Naive thymus-derived CD4-positive, alpha-beta T cell (primary cell): ENCODE measurements at regions of chr9 and their contacts with region 1.

Region 1: GRCh38 chr9:129139993-129140396 is 28.8 kb downstream of the PTPA start:
- DNase-seq: peak; percentile 31 to 82 (median 66)
- ATAC-seq: peak; percentile 90
- H3K4me3 ChIP-seq: peak overlapping the region; percentile 64
- H3K4me3 Mint-ChIP-seq: peak overlapping the region; percentile 85 to 96 (median 90)
- H3K27ac ChIP-seq: peak overlapping the region; percentile 92
- H3K27ac Mint-ChIP-seq: peak overlapping the region; percentile 88 to 99 (median 94)
- H3K4me1 ChIP-seq: peaks cover 24 to 35% of the 10 kb centered on the region in 2 donors
- H3K4me1 Mint-ChIP-seq: peaks cover 11 to 45% (median 29%) of the 10 kb centered on the region in 7 donors
- H3K27me3 ChIP-seq: no peaks in the 10 kb centered on the region
- H3K27me3 Mint-ChIP-seq: no peaks in the 10 kb centered on the region

Region 2: DNA sequence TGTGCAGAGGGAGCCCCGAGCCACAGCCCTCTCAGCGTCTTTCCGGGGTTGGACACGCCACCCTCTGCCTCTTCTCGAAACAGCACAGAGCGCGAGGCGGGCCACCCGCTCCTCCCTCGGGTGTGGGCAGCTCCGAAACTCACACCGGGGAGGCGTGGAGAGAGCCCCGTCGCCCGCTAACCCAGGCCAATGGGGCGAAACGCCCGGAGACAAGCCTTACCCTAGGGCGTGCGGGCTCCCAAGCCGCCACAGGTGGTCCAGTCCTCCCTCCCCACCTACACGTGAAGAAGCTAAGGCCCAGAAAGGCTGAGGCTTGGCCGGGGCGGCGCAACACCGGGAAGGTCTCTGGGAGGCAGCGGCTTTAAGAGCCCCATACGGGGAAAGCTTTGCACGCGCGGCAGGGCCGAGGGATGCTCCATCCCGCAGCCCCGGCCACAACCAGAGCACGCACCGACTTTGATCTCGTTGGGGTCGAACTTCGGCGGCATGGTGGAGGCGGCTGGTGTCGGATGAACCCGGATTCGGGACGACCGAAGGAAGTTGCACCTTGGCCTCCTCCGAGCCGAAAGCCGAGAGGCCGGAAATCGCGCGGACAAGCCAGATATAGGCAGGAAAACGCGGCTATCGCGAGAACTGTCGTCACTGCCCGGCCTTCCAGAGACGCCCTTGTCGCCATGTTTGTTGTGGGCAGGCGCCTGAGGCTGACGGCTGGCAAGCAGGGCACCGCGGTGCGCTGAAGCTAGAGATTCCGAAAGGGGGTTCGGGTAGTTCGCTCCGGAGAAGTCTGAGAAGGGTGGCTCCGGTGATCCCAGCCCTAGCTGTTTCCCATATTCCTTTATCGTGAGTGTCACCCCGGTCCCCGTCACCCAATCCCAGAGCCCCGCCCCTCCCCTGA is 1688.9 kb before region 1 on chr9 and contains the starts of genes LRSAM1 and RPL12:
- CTCF ChIA-PET with region 1: no interaction called
- POLR2A ChIA-PET with region 1: no interaction called
- intact Hi-C with region 1: no loop called
- DNase-seq: peak; percentile 95 to 100 (median 98)
- ATAC-seq: peak; percentile 85
- H3K4me3 ChIP-seq: peak within 1 kb of the TSS; percentile 75
- H3K4me3 Mint-ChIP-seq: peak within 1 kb of the TSS; percentile 83 to 98 (median 94)
- H3K27ac ChIP-seq: peak within 1 kb of the TSS; percentile 86
- H3K27ac Mint-ChIP-seq: peak within 1 kb of the TSS; percentile 76 to 97 (median 94)
- H3K4me1 ChIP-seq: peaks cover 21 to 25% of the 10 kb centered on the region in 2 donors
- H3K4me1 Mint-ChIP-seq: peaks cover 21 to 45% (median 40%) of the 10 kb centered on the region in 7 donors
- H3K27me3 ChIP-seq: no peaks in the 10 kb centered on the region
- H3K27me3 Mint-ChIP-seq: no peaks in the 10 kb centered on the region
- total RNA-seq, gene LRSAM1: 15.1 to 23.3 (median 19.8) TPM
- total RNA-seq, gene RPL12: 1,005 to 1,932 (median 1,675) TPM

Region 3: DNA sequence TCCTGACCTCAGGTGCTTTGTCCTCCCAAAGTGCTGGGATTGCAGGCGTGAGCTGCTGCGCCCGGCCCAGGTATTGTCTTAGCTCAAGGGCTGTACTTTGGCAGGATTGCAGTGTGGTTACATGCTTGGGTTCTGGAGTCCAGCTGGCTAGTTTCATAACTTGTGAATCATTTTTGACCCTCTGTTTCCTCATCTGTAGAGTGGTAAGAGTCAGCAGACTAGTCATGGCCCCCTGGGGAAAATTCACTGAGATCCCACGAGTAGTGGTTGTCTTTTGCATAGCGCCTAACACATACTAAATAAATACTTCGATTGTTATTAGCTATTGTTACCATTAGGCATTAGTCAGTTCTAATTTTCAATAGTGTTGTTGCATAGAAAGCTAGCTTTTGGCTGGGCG is 14.5 kb before region 1 on chr9:
- CTCF ChIA-PET with region 1: interaction called, 80 read pairs
- POLR2A ChIA-PET with region 1: no interaction called
- intact Hi-C with region 1: no loop called
- DNase-seq: no peak
- ATAC-seq: no peak
- H3K4me3 ChIP-seq: no peak overlapping the region
- H3K4me3 Mint-ChIP-seq: no peak overlapping the region
- H3K27ac ChIP-seq: no peak overlapping the region
- H3K27ac Mint-ChIP-seq: no peak overlapping the region
- H3K4me1 ChIP-seq: no peaks in the 10 kb centered on the region
- H3K4me1 Mint-ChIP-seq: peaks cover 0 to 6% (median 4%) of the 10 kb centered on the region in 7 donors
- H3K27me3 ChIP-seq: no peaks in the 10 kb centered on the region
- H3K27me3 Mint-ChIP-seq: no peaks in the 10 kb centered on the region

Region 4: GRCh38 chr9:129202613-129203555 is 62.9 kb after region 1 on chr9:
- CTCF ChIA-PET with region 1: no interaction called
- POLR2A ChIA-PET with region 1: no interaction called
- intact Hi-C with region 1: loop called in 1 of 2 experiments (anchors 2 kb)
- DNase-seq: peak; percentile 84 to 96 (median 92)
- ATAC-seq: peak; percentile 99
- H3K4me3 ChIP-seq: peak overlapping the region; percentile 77
- H3K4me3 Mint-ChIP-seq: peak overlapping the region; percentile 64 to 82 (median 74)
- H3K27ac ChIP-seq: peak overlapping the region; percentile 83
- H3K27ac Mint-ChIP-seq: peak overlapping the region in 8 of 9 donors; percentile 64 to 91 (median 84)
- H3K4me1 ChIP-seq: peaks cover 21 to 23% of the 10 kb centered on the region in 2 donors
- H3K4me1 Mint-ChIP-seq: peaks cover 13 to 26% (median 20%) of the 10 kb centered on the region in 7 donors
- H3K27me3 ChIP-seq: no peaks in the 10 kb centered on the region
- H3K27me3 Mint-ChIP-seq: peaks cover 0 to 11% (median 0%) of the 10 kb centered on the region in 5 donors

Region 5: DNA sequence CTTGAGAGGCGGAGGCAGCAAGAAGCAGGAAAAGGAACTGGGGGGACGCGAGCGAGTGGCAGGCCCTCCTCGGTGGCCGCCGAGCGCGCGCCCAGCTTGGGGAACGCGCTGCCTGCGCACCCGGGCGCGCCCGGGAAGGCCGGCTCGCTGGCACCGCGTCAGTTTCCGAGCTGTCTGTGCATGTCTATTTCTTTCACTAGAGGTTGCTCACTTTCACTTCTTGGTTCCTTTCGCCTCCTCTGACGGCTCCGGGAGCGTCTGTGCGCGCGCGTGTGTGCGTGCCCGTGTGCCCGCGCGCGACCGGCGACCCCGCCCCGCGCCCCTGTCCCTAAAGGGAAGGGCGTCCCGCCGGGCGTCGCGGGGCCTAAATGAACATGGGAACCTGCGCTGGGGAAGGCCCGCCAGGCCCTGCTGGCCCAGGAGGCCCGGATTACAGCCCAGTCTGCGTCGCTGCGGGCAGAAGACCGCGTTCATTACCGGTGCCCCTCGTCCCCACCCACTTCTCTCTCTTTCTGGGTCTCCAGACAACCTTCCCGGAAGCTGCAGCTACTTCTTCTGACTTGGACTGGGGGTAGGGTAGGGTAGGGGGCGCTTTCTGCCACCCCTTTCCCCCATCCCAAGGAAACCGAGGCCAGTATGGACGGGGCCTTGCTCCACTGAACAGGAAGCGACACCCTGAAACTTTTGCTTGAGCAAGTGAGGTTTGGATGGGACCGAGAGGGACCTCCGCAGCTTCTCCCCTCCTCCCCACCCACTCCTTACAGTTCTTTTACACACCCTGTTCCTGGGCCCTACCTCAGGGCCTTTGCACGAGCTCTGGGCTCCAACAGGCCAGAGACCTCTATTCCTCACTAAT is 243.8 kb after region 1 on chr9:
- CTCF ChIA-PET with region 1: interaction called, 3 read pairs
- POLR2A ChIA-PET with region 1: interaction called, 5 read pairs
- intact Hi-C with region 1: loop called in 1 of 2 experiments (anchors 1 kb)
- DNase-seq: peak; percentile 60 to 87 (median 79)
- ATAC-seq: peak; percentile 96
- H3K4me3 ChIP-seq: peak overlapping the region; percentile 62
- H3K4me3 Mint-ChIP-seq: peak overlapping the region; percentile 70 to 86 (median 82)
- H3K27ac ChIP-seq: peak overlapping the region; percentile 82
- H3K27ac Mint-ChIP-seq: peak overlapping the region; percentile 72 to 96 (median 92)
- H3K4me1 ChIP-seq: peaks cover 0 to 12% of the 10 kb centered on the region in 2 donors
- H3K4me1 Mint-ChIP-seq: peaks cover 8 to 19% (median 10%) of the 10 kb centered on the region in 7 donors
- H3K27me3 ChIP-seq: no peaks in the 10 kb centered on the region
- H3K27me3 Mint-ChIP-seq: peaks cover 0 to 9% (median 0%) of the 10 kb centered on the region in 5 donors

Region 6: DNA sequence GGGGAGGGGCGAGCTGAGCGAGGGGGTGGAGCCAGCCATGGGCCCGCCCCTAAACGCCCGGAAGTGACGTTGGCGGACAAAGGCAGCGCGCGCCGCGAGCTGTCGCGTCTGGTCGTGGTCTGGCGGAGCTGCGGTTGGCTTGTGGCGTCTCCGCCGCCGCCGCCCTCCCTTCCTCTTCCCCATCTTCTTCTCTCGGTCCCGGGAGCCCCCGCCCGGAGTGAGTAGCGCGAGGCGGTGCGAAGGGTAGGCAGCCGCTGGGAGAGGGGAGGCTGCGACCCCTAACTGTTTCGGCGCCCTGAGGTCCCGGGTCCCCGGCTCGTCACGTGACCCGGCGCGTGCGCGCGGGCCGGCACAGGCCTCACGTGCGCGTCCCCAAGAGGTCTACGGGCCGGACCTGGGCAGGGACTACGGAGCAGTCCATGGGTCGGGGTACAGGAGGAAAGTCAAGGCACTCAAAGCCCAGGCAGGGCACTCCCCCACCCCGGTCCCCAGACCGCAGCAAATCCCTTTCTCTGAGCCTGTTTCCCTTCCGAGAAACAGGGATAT is 486.2 kb after region 1 on chr9 and contains the start of gene NTMT1:
- CTCF ChIA-PET with region 1: interaction called, 28 read pairs
- POLR2A ChIA-PET with region 1: interaction called, 35 read pairs
- intact Hi-C with region 1: loop called (anchors 1 kb)
- DNase-seq: peak; percentile 88 to 94 (median 90)
- ATAC-seq: peak; percentile 93
- H3K4me3 ChIP-seq: peak within 1 kb of the TSS; percentile 85
- H3K4me3 Mint-ChIP-seq: peak within 1 kb of the TSS; percentile 85 to 95 (median 88)
- H3K27ac ChIP-seq: peak within 1 kb of the TSS; percentile 89
- H3K27ac Mint-ChIP-seq: peak within 1 kb of the TSS; percentile 88 to 99 (median 94)
- H3K4me1 ChIP-seq: peaks cover 27 to 42% of the 10 kb centered on the region in 2 donors
- H3K4me1 Mint-ChIP-seq: peaks cover 33 to 63% (median 59%) of the 10 kb centered on the region in 7 donors
- H3K27me3 ChIP-seq: no peaks in the 10 kb centered on the region
- H3K27me3 Mint-ChIP-seq: peaks cover 4 to 18% (median 7%) of the 10 kb centered on the region in 5 donors
- total RNA-seq, gene NTMT1: 31.0 to 50.1 (median 34.2) TPM

Region 7: DNA sequence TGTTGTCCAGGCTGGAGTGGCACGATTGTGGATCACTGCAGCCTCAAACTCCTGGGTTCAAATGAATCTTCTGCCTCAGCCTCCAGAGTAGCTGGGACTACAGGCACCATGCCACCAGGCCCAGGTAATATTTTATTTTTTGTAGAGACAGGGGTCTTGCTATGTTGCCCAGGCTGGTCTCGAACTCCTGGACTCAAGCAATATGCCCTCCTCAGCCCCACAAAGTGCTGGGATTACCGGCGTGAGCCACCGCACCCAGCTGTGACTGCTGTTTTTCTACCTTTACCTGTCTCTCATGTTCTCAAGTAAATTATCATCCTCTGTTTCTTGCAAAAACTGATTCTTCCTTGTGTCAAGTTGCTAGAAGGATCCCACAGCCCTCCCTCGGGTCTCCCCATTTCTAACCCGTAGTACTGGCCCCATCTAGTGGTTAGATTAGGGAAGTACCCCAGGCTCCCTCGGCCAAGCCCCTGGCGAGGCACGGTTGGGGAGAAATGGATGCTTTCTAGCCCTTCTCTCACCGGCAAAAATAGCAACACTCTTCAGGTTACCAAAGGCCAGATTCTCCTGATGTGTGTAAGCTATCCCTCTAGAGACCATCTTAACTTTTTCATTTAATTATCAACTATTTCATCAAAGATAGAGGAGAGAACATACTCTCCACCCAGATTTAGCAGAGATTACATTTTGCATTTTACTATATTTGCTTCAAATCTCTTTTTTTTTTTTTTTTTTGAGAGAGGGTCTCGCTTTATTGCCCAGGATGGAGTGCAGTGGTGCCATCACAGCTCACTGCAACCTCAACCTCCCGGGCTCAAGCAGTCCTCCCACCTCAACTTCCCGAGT is 643.7 kb after region 1 on chr9:
- CTCF ChIA-PET with region 1: interaction called, 9 read pairs
- POLR2A ChIA-PET with region 1: no interaction called
- intact Hi-C with region 1: loop called (anchors 1 to 2 kb)
- DNase-seq: peak; percentile 44 to 83 (median 76)
- ATAC-seq: peak; percentile 99
- H3K4me3 ChIP-seq: no peak overlapping the region
- H3K4me3 Mint-ChIP-seq: peak overlapping the region in 1 of 10 donors; percentile 42
- H3K27ac ChIP-seq: no peak overlapping the region
- H3K27ac Mint-ChIP-seq: no peak overlapping the region
- H3K4me1 ChIP-seq: no peaks in the 10 kb centered on the region
- H3K4me1 Mint-ChIP-seq: peaks cover 0 to 6% (median 4%) of the 10 kb centered on the region in 7 donors
- H3K27me3 ChIP-seq: no peaks in the 10 kb centered on the region
- H3K27me3 Mint-ChIP-seq: peaks cover 0 to 20% (median 0%) of the 10 kb centered on the region in 5 donors